HEK293T (cell line): ENCODE measurements at regions of chr2 and their contacts with region 1.

Region 1: DNA sequence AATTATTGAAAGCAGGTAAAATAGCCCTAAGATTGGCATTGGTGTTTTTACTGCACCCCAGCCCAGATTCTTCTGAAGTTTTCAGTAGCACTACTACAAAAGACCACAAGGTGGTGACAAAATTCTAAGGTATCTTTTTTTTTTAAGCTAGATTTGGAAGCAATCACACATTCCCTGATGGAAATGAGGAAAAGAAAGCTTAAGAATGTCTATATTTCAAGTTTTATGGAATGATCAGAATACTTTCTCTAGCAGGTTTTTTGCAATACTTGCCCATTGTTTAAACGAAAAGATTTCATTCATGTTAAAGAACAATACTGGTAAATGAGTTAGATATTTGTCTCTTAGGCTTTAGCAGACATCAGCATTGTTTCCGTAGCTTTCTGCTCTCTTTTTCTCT is 32.1 kb upstream of the ZNF638 start:
- DNase-seq: peak; percentile 39

Region 2: DNA sequence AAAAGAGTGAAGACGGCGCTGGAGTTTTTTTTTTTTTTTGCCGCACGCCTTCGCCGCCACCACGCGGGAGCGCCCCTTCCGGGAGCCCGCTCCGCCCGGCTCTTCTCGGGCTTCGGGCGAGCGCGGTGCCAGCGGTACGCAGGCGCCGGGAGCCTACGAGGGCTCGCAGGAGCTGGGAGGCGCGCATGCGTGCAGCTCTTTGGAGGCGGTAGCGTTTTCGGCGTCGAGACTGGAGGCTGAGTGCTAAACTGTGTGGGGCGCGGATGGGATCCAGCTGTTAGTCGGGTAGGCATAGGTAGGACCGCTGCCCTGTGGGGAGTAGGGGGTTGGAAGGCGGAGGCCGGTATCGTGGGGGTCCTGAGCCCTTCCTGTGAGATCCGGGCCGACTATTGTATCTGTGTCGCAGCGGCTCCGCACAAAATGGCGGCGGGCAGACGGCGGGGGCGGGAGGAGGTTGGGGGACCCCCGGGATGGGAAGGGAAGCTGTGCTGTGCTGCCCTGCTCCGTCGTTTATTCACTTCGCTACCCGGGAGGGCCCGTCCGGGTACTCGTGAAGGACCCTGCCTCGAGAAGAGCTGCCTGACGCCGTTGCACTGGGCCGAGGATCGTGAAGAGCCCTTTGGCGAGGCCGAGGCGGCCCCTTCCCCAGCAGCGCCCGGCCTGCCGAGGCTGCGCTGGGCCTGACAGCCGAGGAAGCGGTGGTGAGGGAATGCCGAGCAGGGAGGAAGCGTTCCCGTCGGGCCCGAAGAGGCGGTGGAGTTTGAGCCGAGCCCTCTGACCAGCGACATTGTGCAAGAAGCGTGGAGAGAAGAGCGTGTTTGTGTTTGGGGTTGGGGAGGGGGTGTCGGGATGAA is 32.3 kb after region 1 on chr2 and contains the start of gene ZNF638:
- CTCF ChIA-PET with region 1: interaction called, 15 read pairs
- POLR2A ChIA-PET with region 1: interaction called, 10 read pairs
- DNase-seq: peak; percentile 95

Region 3: GRCh38 chr2:71410696-71411095 is 111.2 kb after region 1 on chr2:
- CTCF ChIA-PET with region 1: no interaction called
- POLR2A ChIA-PET with region 1: no interaction called
- DNase-seq: no peak

Region 4: DNA sequence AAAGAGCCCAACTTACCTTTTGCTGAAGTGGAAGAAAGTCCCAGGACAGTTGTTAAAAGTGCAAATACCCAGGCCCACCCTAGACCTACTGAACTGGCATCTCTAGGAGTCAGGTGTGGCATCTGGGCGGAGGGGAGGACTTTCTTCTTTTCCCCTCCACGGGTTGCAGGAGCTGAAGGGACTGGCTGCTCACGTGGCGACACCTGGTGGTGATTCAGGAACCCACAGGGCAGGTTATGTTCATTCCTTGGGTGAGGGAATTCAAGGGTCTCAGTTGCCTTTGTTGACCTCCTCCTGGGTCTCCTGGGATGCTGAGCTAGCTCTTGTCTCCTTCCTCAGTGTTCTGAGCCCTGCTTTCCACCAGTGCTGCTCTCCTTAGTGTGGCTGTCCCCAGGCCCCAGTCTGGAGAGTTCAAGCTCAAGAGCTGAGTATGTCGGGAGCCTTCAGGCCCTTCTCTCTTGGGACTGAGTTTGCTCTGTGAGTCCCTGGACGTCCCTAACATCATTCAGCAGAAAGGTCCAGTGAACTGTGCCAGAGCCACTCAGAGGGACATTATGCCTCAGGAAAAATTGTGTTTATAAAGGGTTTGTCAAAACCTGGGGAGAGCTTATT is 210.8 kb after region 1 on chr2:
- CTCF ChIA-PET with region 1: interaction called, 19 read pairs
- POLR2A ChIA-PET with region 1: no interaction called
- DNase-seq: peak; percentile 84